GM10248 (cell line): ENCODE measurements at regions of chr4 and their contacts with region 1.

Region 1: DNA sequence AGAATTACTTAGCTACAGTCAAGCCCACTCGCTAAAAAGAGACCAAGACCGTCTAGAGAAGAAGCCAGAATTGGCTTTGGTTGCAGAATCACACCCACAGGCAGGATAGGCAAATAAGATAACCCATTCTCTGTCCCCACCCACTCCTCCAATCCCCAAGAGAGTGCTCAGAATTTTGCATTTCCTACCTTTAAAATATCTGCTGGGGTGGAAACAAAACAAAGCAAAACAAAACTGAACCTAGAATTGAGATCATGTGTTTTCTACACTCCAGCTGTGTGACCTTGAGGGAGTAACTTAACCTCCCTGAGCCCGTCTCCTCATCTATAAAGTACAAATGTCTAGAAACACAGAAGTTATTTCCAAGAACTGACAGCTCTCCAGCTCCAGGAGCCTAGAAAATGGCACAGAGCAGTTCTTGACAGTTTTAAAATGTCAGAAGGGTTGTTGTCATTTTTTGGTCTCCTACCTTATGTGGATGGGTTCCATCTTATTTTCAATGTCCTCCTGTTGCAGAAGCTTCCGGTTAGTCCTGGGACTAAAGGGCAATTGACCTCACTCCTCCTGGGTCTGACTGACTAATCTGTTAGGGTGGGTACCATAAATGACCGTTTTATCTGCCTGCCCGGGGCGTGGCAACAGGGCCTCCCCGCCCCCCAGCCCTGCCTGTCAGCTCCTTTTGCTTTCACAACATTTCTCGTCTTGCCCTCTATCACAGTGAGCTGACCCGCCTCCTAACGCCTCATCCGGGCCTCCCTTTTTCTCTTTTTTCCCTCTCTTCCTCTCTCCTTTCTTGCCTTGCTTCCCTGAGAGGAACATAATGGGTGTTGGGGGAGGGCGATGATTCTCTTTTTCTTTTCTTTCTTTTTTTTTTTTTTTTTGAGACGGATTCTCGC is 114.0 kb downstream of the RBM47 start:
- DNase-seq: peak; percentile 84
- CTCF ChIP-seq: no peak

Region 2: DNA sequence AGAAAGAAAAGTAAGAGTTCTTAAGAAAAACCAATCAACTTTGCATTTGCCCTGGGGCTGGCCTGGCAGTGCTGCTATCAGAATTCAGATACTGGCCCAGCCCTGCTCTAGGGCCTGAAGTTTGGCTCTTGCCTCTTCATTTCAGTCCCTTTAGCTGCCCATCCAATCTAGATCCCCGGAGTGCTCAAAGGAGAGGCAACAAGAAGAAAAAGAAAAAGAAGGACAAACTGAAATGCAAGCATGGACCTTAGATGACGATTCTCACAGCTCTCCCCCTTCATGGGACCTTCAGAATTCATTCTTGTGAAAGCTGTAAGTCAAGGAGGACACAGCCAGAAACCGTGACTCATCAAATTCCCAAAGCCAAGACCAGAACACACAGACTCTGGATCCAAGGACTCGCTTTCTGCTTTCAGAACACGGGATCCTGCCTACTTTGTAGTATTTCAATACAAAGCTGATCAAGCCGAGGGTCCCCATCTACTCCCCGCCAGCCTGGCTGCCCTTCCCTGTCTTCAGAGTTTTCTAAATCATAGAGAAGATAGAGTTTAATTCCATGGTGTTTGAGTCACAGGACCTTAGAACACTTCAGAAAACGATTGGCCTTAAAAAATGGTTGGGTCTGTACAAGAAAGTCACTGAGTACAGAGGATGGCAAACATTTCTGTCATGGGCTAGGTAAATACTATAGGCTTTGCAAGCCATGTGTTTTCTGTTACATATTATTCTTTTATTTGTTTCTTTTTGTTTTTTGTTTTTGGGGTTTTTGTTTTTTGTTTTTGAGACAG is 10.4 kb after region 1 on chr4:
- CTCF ChIA-PET with region 1: interaction called, 11 read pairs
- POLR2A ChIA-PET with region 1: interaction called, 3 read pairs
- DNase-seq: no peak
- CTCF ChIP-seq: no peak